ENCODE measurements at regions of chrX and their contacts with region 1.

Region 1: GRCh38 chrX:103254921-103255493 is at the start of gene TCEAL8:
- DNase-seq: peak; percentile 90
- ATAC-seq: peak; percentile 99
- total RNA-seq, gene TCEAL8: 38.0 TPM

Region 2: GRCh38 chrX:103214870-103215424 is 40.1 kb before region 1 on chrX and contains the start of gene BEX4:
- intact Hi-C with region 1: loop called (anchors 2 kb)
- DNase-seq: peak; percentile 89
- ATAC-seq: peak; percentile 99
- total RNA-seq, gene BEX4: 30.3 TPM

Region 3: DNA sequence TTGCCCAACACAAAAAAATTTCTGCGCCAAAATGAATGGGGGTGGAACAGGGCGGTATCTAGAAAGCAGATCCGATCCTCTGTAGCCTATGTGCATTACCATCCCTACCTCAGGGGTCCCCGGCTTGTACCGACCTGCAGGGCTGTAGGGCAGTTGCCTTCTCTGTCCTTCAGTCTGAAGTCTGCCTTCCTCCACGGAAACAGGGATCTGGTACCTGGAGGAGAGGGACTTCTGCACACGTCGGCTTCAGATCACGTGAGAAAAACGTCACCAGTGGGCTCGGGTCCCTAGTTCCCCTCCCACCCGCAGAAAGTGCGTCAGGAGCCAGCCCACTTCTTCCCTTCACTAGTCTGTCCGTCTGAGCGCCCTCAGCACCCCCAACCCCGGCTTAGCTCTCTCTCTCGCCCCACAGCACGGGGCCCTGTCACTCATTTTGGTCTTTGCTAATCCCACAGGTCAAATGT is 21.6 kb after region 1 on chrX and contains the start of gene TCEAL5:
- intact Hi-C with region 1: no loop called
- DNase-seq: no peak
- ATAC-seq: no peak
- total RNA-seq, gene TCEAL5: not detected

Region 4: DNA sequence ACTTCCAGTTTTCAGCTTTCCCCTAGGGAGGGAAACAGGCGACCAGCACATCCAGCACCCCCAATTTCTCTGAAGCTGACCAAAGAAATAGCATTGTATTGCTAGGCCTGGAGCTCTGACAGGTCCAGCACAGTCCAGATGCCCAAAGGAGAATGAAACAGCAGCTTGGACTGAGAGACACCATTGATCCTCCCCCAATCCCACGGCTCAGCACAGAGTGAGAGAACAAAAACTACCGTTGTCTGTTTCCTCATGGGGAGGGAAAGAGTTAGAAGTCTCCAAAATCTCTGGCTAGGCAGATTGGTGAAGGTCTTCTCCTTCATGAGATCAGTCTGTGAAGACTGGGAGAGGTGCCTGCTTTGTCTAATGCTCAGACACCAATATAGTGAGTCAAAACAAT is 83.7 kb after region 1 on chrX:
- intact Hi-C with region 1: no loop called
- DNase-seq: no peak
- ATAC-seq: no peak